ENCODE measurements at regions of chr20 and their contacts with region 1.

Region 1: DNA sequence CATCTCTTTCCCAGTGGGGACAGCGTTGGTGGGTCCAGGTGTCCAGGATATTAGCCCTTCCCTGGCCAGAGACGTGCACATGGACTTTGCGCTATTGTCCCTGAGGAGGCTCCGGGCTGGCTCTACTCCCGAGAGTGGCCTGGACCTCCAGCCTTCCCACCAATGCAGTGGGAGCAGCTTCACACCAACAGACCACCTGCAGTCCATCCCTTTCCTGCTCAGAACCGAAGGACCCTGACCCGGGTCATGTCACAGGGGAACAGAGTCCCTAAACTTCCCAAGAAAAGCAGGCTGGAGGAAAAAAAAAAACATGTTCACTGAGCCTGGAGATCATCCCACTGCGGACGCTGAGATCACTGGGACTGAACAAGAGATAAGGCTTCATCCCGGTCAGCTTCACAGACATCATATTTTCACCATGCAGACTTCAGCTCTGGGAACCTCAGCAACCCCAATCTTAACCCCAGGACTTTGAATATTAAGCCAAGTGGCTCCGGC is 18.3 kb downstream of the ZMYND8 start:
- DNase-seq: peak; percentile 14 to 56
- ATAC-seq: no peak
- H3K4me3 ChIP-seq: no peak overlapping the region
- H3K27ac ChIP-seq: peak overlapping the region; percentile 1
- H3K4me1 ChIP-seq: peaks cover 35% of the 10 kb centered on the region
- H3K27me3 ChIP-seq: no peaks in the 10 kb centered on the region
- CTCF ChIP-seq: no peak

Region 2: DNA sequence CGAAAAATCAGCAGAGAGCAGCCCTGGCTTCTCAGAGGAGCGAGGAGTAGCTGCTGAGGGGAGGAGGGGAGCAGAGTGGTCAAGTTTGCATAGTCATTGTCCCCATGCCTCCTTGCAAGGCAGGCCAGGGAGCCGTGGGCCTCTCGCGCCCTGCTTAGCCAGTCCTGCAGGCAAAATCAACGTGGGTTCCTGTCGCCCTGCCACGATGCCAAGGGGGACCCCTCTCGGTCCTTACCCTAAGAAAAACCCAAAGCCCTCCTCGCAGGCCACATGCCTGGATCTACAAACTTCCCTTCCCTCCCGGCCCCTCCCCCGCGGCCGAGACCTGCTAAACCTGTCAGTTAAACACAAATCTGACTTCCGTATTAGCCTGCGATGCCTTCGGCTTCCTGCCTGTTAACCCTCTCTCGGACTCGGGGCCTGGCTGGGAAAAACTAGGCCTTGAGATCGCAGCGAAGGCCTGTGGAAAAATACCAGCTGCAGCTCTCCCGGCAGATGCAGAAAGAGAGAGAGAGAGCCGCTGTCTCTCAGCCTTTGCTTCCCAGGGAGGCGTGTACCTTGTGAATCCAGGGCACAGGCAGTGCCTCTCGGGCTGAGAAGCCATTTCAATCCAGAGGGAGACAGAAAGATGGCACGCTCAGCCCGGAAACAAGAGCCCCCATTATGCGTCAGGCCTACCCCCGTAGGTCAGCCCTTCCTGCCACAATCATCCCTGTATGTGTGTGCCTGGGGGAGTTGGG is 19.3 kb after region 1 on chr20:
- intact Hi-C with region 1: loop called in 1 of 2 experiments (anchors 2 kb)
- DNase-seq: peak; percentile 81 to 88
- ATAC-seq: peak; percentile 35 to 58 (median 40)
- H3K4me3 ChIP-seq: peak overlapping the region; percentile 61
- H3K27ac ChIP-seq: peak overlapping the region; percentile 97
- H3K4me1 ChIP-seq: peaks cover 89% of the 10 kb centered on the region
- H3K27me3 ChIP-seq: no peaks in the 10 kb centered on the region
- CTCF ChIP-seq: no peak